Heart left ventricle (tissue), 16 donors: ENCODE measurements at regions of chr15 and their contacts with region 1.

Region 1: DNA sequence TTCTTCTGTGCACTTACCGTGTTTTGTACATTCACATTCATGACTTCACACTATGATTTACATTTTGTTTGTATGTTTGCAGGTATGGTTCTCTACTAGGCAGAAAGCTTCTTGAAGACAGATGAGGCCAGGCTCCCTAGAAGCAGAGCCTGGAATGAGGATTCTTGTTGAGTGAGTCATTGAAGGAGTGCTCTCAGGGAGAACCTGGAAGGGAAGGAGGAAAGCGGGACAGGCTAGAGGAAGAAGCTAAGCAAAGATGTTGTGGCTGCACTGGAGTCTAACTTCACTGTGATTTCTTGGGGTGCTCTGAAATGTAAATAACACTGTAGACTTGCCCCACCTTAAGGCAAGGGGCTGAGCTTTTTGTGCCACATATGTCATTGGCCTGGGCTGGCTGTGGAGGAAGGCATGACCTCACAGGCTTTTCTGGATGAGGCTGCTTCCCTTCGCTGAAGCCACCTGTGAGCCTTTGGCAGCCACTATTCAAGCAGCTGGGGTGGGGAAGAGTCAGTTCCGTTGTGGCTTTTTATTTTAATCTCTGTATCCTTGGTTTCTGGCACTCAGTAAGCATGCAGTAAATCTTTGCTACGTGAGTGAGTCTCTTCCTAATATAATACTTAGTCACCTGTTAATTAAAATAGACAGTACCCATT is 307.3 kb downstream of the SV2B start:
- DNase-seq: peak in 4 of 5 donors; percentile 45 to 54 (median 48)
- ATAC-seq: peak; percentile 34 to 82 (median 69)
- H3K4me3 ChIP-seq: no peak overlapping the region
- H3K27ac ChIP-seq: peak overlapping the region in 6 of 12 donors; percentile 50 to 90 (median 85)
- H3K4me1 ChIP-seq: peaks cover 0 to 34% (median 20%) of the 10 kb centered on the region in 12 donors
- H3K27me3 ChIP-seq: no peaks in the 10 kb centered on the region
- CTCF ChIP-seq: no peak
- POLR2A ChIP-seq: no peak

Region 2: GRCh38 chr15:90701880-90702630 is 705.3 kb before region 1 on chr15:
- intact Hi-C with region 1: no loop called
- DNase-seq: peak in 3 of 5 donors; percentile 15 to 57 (median 23)
- ATAC-seq: peak in 1 of 4 donors; percentile 60
- H3K4me3 ChIP-seq: no peak overlapping the region
- H3K27ac ChIP-seq: peak overlapping the region in 1 of 12 donors; percentile 57
- H3K4me1 ChIP-seq: peaks cover 0 to 16% (median 0%) of the 10 kb centered on the region in 12 donors
- H3K27me3 ChIP-seq: no peaks in the 10 kb centered on the region
- CTCF ChIP-seq: peak in 2 of 12 donors; percentile 11 to 13
- POLR2A ChIP-seq: no peak

Region 3: DNA sequence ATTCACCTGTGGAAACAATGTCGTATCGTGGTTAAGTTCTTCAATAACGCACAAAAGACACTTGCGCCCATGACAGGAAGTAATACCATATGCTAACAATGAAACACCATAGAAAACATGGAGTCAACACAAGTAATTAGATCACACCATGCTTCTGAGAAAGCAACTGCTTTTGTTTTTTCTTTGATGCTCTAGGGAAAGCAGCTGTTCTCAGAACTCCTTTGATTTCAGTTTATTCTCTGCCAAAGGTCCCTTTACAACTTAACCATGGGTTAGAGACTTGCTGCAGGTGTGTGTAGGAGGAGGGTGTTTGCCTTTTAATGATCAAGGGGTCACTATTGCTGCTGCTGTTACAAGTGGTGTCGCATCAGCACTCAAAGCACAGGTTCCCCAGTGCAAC is 122.2 kb after region 1 on chr15:
- intact Hi-C with region 1: loop called in 1 of 10 experiments (anchors 5 kb)
- DNase-seq: no peak
- ATAC-seq: no peak
- H3K4me3 ChIP-seq: no peak overlapping the region
- H3K27ac ChIP-seq: no peak overlapping the region
- H3K4me1 ChIP-seq: peaks cover 0 to 16% (median 0%) of the 10 kb centered on the region in 12 donors
- H3K27me3 ChIP-seq: no peaks in the 10 kb centered on the region
- CTCF ChIP-seq: no peak
- POLR2A ChIP-seq: no peak

Region 4: DNA sequence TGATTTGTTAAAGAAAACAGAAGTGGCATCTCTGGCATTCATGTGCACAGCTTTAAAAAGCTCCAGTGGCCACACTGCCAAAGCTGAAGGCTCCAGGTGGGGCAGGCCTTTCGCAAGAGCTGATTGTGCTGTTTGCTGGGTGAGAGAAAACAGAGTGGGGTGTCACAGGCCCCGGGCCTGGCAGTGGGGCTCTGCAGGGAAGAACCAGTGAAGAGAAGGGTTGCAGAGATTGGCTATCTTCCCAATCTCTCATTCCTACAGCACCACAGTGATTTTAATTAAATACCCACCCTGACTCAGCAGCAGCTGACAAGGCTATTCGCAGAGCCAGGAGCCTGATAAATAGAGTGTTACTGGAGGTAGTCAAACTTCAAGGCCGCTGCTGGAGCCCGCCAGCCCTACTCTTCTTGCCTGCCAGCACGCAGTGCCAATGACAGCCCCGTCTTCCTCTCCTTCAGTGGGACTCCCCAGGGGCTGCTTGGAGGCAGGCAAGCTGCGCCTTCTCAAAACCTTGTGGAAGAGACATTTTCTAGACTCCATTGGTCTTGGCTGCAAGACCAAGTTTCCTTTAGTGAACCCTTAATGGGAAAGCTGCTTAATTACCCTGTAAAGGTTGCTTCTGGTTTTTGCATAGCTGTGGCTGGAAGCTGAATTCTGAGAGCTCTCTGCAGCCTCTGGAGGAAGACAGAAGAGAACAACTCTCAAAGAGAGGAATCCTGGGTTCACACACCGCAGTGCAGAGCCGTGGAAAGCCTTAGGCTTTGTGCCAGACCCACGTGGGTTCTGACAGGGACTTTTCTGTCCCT is 220.3 kb after region 1 on chr15:
- intact Hi-C with region 1: loop called in 1 of 10 experiments (anchors 5 kb)
- DNase-seq: peak; percentile 40 to 77 (median 68)
- ATAC-seq: peak; percentile 87 to 94 (median 92)
- H3K4me3 ChIP-seq: no peak overlapping the region
- H3K27ac ChIP-seq: peak overlapping the region; percentile 39 to 77 (median 69)
- H3K4me1 ChIP-seq: peaks cover 0 to 23% (median 12%) of the 10 kb centered on the region in 12 donors
- H3K27me3 ChIP-seq: no peaks in the 10 kb centered on the region
- CTCF ChIP-seq: no peak
- POLR2A ChIP-seq: no peak

Region 5: DNA sequence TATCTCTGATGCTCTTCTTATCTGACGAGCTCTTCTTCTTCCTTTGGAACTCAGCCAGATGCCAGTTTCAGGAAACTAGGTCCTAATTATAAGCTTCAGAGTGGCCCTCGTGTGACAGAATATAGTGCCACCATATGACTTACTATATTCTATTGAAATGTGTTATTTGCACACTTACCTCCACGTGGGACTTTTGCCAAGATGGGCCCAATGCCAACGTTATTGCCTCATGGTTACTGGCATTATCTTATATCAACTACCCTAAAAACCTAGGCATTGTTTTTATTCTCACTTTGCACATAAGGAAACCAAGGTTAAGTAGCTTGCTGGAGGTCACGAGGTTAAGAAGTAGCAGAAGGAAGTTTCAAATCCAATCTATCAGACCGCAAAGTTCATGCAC is 374.9 kb after region 1 on chr15:
- intact Hi-C with region 1: no loop called
- DNase-seq: no peak
- ATAC-seq: no peak
- H3K4me3 ChIP-seq: no peak overlapping the region
- H3K27ac ChIP-seq: peak overlapping the region in 7 of 12 donors; percentile 22 to 79 (median 62)
- H3K4me1 ChIP-seq: peaks cover 0 to 32% (median 1%) of the 10 kb centered on the region in 12 donors
- H3K27me3 ChIP-seq: peaks cover 0 to 7% (median 0%) of the 10 kb centered on the region in 9 donors
- CTCF ChIP-seq: no peak
- POLR2A ChIP-seq: no peak